Activated naive CD4-positive, alpha-beta T cell treated with anti-CD3 and anti-CD28 coated beads, Interleukin-2, amount 10 ng/mL, durations not matched to agents 7 days and 5 days (primary cell): ENCODE measurements at regions of chr6 and their contacts with region 1.

Region 1: GRCh38 chr6:166258854-166259276 is 49.3 kb downstream of the PRR18 start:
- DNase-seq: peak; percentile 64
- H3K4me3 Mint-ChIP-seq: peak overlapping the region; percentile 48
- H3K27ac Mint-ChIP-seq: peak overlapping the region; percentile 94
- H3K4me1 Mint-ChIP-seq: peaks cover 50% of the 10 kb centered on the region
- H3K27me3 Mint-ChIP-seq: peaks cover 57% of the 10 kb centered on the region

Region 2: DNA sequence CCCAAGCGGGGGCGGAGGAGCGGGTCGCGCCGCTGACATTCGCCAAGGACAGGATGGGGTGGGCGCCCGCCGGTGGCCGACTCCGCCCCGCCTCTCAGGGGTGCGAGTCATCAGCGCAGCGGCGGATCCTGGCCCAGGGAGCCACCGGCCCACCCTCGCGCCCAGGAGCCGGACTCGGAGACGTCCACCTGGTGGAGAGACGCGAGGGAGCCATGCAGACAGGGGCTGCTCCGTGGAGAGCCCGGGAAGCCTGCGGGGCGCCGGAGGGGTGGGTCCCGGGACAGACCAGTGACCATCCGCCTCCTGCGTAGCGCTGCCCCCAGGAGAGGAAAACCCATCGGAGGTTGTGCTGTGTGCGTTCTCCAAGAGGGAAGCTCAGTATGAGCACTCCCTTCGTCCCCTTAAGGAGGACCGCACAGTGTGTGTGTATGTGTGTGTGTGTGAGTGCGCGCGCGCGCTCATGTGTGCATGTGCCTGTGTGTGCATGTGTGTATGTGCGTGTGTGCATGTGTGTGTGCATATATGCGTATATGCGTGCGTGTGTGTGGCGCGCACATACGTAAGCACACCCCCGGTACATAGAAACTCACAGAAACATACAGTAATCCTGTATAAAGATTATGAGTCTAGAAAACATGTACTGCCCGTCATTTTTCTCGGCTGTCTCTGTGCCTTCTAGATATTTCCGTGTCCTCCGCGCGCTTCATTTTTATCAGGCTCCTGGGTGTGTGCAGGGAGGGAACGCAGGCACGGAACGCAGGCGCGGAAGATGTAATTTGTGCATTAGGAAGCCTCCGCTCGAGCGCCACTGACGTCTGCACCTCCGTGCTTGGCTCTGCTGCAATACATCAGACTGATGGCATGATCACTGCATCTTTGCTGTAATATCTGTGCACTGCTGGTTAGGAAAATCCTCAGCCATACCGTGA is 250.2 kb before region 1 on chr6:
- CTCF ChIA-PET with region 1: no interaction called
- DNase-seq: no peak
- H3K4me3 Mint-ChIP-seq: no peak overlapping the region
- H3K27ac Mint-ChIP-seq: no peak overlapping the region
- H3K4me1 Mint-ChIP-seq: no peaks in the 10 kb centered on the region
- H3K27me3 Mint-ChIP-seq: peaks cover 74% of the 10 kb centered on the region

Region 3: GRCh38 chr6:166097915-166098522 is 160.8 kb before region 1 on chr6:
- CTCF ChIA-PET with region 1: no interaction called
- DNase-seq: peak; percentile 60
- H3K4me3 Mint-ChIP-seq: no peak overlapping the region
- H3K27ac Mint-ChIP-seq: no peak overlapping the region
- H3K4me1 Mint-ChIP-seq: peaks cover 2% of the 10 kb centered on the region
- H3K27me3 Mint-ChIP-seq: peaks cover 22% of the 10 kb centered on the region

Region 4: GRCh38 chr6:166156942-166157341 is 101.9 kb before region 1 on chr6:
- CTCF ChIA-PET with region 1: no interaction called
- DNase-seq: no peak
- H3K4me3 Mint-ChIP-seq: no peak overlapping the region
- H3K27ac Mint-ChIP-seq: no peak overlapping the region
- H3K4me1 Mint-ChIP-seq: no peaks in the 10 kb centered on the region
- H3K27me3 Mint-ChIP-seq: peaks cover 16% of the 10 kb centered on the region

Region 5: GRCh38 chr6:166235666-166236292 is 23.1 kb before region 1 on chr6:
- CTCF ChIA-PET with region 1: interaction called, 10 read pairs
- DNase-seq: no peak
- H3K4me3 Mint-ChIP-seq: no peak overlapping the region
- H3K27ac Mint-ChIP-seq: peak overlapping the region; percentile 66
- H3K4me1 Mint-ChIP-seq: peaks cover 55% of the 10 kb centered on the region
- H3K27me3 Mint-ChIP-seq: peaks cover 46% of the 10 kb centered on the region

Region 6: DNA sequence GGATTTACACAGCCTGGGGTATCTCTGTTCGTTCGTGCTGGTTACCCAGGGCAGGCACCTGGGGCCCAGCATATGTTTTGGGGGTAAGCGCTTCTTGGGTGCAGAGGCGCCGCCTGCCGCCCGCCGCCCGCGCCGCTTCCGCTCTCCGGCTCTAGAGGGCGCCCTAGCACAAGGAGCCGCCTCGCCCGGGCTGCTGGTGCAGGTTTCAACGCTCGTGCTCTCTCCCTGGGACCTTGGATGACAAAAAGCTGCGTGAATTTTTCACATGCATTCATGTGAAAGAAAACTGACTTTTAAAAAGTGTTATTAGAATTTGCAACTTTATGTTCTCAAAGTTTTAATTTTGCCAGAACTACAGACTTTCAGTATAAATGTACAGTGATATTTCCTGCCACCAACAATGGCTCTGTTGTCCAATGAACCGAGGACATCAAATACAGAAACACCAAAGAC is 16.9 kb after region 1 on chr6:
- CTCF ChIA-PET with region 1: interaction called, 10 read pairs
- DNase-seq: peak; percentile 81
- H3K4me3 Mint-ChIP-seq: no peak overlapping the region
- H3K27ac Mint-ChIP-seq: no peak overlapping the region
- H3K4me1 Mint-ChIP-seq: peaks cover 7% of the 10 kb centered on the region
- H3K27me3 Mint-ChIP-seq: peaks cover 36% of the 10 kb centered on the region